PC-9 (cell line): ENCODE measurements at regions of chr1 and their contacts with region 1.

Region 1: DNA sequence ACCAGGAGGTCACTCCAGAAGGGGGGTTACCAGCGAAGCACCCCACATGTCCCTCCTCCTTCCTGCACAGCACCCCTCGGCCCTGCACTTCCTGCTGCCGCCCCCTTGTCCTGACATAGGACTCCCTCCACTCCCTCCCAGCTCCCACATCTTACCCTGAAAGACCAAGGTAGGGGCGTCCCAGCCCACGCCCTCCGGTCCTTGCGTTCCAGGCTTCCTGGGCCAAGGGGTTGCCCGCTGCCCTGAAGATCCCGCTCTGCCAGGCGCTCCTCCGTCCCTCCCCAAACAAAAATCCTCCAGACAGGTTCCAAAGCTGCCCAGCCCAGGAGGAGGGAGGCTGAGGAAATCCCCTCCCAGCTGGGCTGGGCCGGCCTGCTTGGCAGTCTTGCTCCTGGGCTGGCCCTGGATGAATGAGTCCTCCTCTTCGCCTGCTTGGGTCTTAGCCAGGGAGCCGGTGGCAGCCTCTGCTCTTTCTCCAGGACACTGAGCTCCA is at the start of gene RHBDL2:
- DNase-seq: peak; percentile 71 to 87
- H3K4me3 ChIP-seq: peak within 1 kb of the TSS; percentile 66
- H3K27ac ChIP-seq: no peak within 1 kb of the TSS
- H3K4me1 ChIP-seq: peaks cover 5% of the 10 kb centered on the region; the same call in 1 of the 2 replicates
- H3K27me3 ChIP-seq: no peaks in the 10 kb centered on the region
- CTCF ChIP-seq: no peak
- total RNA-seq, gene RHBDL2: 31.6 and 36.9 TPM in 2 replicates

Region 2: DNA sequence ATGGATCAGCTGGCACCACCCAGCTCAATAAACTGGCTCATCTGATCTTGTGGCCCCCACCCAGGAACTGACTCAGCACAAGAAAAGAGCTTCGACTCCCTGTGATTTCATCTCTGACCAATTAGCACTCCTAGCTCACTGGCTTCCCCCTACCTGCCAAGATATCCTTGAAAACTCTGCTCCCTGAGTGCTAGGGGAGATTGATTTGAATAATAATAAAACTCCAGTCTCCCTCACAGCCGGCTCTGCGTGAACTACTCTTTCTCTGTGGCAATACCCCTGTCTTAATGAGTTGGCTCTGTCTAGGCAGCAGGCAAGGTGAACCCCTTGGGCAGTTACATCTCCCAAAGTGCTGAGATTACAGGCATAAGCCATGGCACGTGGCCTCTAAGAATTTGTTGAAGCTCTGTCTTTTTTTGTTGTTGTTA is 11.9 kb after region 1 on chr1:
- CTCF ChIA-PET with region 1: no interaction called
- POLR2A ChIA-PET with region 1: interaction called, 19 read pairs
- intact Hi-C with region 1: loop called (anchors 2 kb)
- DNase-seq: no peak
- H3K4me3 ChIP-seq: no peak overlapping the region
- H3K27ac ChIP-seq: peak overlapping the region; percentile 54
- H3K4me1 ChIP-seq: peaks cover 39% of the 10 kb centered on the region
- H3K27me3 ChIP-seq: no peaks in the 10 kb centered on the region
- CTCF ChIP-seq: no peak

Region 3: GRCh38 chr1:38964140-38964548 is 22.6 kb after region 1 on chr1:
- CTCF ChIA-PET with region 1: interaction called, 10 read pairs
- POLR2A ChIA-PET with region 1: interaction called, 3 read pairs
- intact Hi-C with region 1: loop called (anchors 2 kb)
- DNase-seq: no peak
- H3K4me3 ChIP-seq: no peak overlapping the region
- H3K27ac ChIP-seq: no peak overlapping the region
- H3K4me1 ChIP-seq: peaks cover 42% of the 10 kb centered on the region
- H3K27me3 ChIP-seq: no peaks in the 10 kb centered on the region
- CTCF ChIP-seq: no peak